Activated CD4-positive, alpha-beta memory T cell treated with anti-CD3 and anti-CD28 coated beads, Interleukin-2, amount 10 ng/mL, durations not matched to agents 7 days and 5 days (primary cell): ENCODE measurements at regions of chr1 and their contacts with region 1.

Region 1: GRCh38 chr1:234326497-234327366 is 46.5 kb upstream of the COA6 start:
- DNase-seq: peak; percentile 70
- H3K4me3 Mint-ChIP-seq: peak overlapping the region; percentile 71
- H3K27ac Mint-ChIP-seq: peak overlapping the region; percentile 5
- H3K4me1 Mint-ChIP-seq: peaks cover 16% of the 10 kb centered on the region
- H3K27me3 Mint-ChIP-seq: peaks cover 6% of the 10 kb centered on the region

Region 2: GRCh38 chr1:233993651-233994050 is 333.1 kb before region 1 on chr1:
- CTCF ChIA-PET with region 1: no interaction called
- POLR2A ChIA-PET with region 1: no interaction called
- DNase-seq: no peak
- H3K4me3 Mint-ChIP-seq: no peak overlapping the region
- H3K27ac Mint-ChIP-seq: no peak overlapping the region
- H3K4me1 Mint-ChIP-seq: peaks cover 4% of the 10 kb centered on the region
- H3K27me3 Mint-ChIP-seq: peaks cover 18% of the 10 kb centered on the region

Region 3: GRCh38 chr1:234212764-234213657 is 113.7 kb before region 1 on chr1:
- CTCF ChIA-PET with region 1: interaction called, 11 read pairs
- POLR2A ChIA-PET with region 1: interaction called, 3 read pairs
- DNase-seq: peak; percentile 35
- H3K4me3 Mint-ChIP-seq: peak overlapping the region; percentile 77
- H3K27ac Mint-ChIP-seq: peak overlapping the region; percentile 50
- H3K4me1 Mint-ChIP-seq: peaks cover 43% of the 10 kb centered on the region
- H3K27me3 Mint-ChIP-seq: peaks cover 6% of the 10 kb centered on the region

Region 4: GRCh38 chr1:234271243-234271606 is 55.5 kb before region 1 on chr1:
- CTCF ChIA-PET with region 1: no interaction called
- POLR2A ChIA-PET with region 1: no interaction called
- DNase-seq: no peak
- H3K4me3 Mint-ChIP-seq: no peak overlapping the region
- H3K27ac Mint-ChIP-seq: peak overlapping the region; percentile 57
- H3K4me1 Mint-ChIP-seq: peaks cover 37% of the 10 kb centered on the region
- H3K27me3 Mint-ChIP-seq: peaks cover 6% of the 10 kb centered on the region

Region 5: GRCh38 chr1:234281826-234282489 is 44.8 kb before region 1 on chr1:
- CTCF ChIA-PET with region 1: no interaction called
- POLR2A ChIA-PET with region 1: no interaction called
- DNase-seq: no peak
- H3K4me3 Mint-ChIP-seq: no peak overlapping the region
- H3K27ac Mint-ChIP-seq: no peak overlapping the region
- H3K4me1 Mint-ChIP-seq: no peaks in the 10 kb centered on the region
- H3K27me3 Mint-ChIP-seq: no peaks in the 10 kb centered on the region

Region 6: DNA sequence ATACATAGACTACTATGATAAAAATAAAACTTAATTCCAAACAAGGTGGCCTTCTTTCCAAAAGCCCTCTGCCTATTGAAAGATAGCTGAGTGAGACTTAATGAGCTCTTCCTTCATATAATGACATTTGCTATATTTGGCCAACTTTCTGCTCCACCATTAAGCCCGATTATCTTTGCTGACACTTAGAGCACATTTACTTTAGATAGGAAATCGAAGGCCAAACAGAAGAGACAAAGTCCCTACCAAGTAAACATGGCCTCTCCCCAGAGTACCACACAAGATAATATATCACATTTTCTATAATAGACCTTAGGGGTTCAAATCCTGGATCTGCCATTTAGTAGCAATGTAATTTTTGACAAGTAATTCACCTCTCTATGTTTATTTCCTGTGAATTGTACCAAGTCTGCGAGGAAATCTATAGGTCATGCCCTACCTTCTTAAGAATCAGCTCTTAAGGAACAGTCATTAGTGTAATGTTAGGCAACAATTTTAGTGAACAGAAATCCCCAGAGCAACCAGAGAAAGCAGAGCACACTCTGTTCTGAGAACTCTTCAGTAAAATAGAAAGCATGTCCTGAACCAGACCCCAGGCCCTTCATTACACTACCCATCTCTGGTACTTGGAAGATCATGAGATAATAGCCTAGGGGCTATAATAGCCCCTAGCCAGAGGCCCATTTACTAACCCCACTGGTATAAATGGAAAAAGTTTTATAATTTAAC is 29.2 kb after region 1 on chr1:
- CTCF ChIA-PET with region 1: interaction called, 11 read pairs
- POLR2A ChIA-PET with region 1: no interaction called
- DNase-seq: no peak
- H3K4me3 Mint-ChIP-seq: peak overlapping the region; percentile 81
- H3K27ac Mint-ChIP-seq: peak overlapping the region; percentile 70
- H3K4me1 Mint-ChIP-seq: peaks cover 19% of the 10 kb centered on the region
- H3K27me3 Mint-ChIP-seq: peaks cover 12% of the 10 kb centered on the region